OCI-LY7 (cell line): ENCODE measurements at regions of chr2 and their contacts with region 1.

Region 1: GRCh38 chr2:157404363-157404762 is 39.5 kb downstream of the CYTIP start:
- DNase-seq: peak; percentile 93
- H3K4me3 ChIP-seq: peak overlapping the region; percentile 44
- H3K27ac ChIP-seq: peak overlapping the region; percentile 92
- H3K4me1 ChIP-seq: peaks cover 40% of the 10 kb centered on the region
- CTCF ChIP-seq: no peak

Region 2: GRCh38 chr2:157296490-157297357 is 107.6 kb before region 1 on chr2:
- CTCF ChIA-PET with region 1: no interaction called
- POLR2A ChIA-PET with region 1: no interaction called
- intact Hi-C with region 1: no loop called
- DNase-seq: no peak
- H3K4me3 ChIP-seq: no peak overlapping the region
- H3K27ac ChIP-seq: no peak overlapping the region
- H3K4me1 ChIP-seq: no peaks in the 10 kb centered on the region
- CTCF ChIP-seq: no peak

Region 3: GRCh38 chr2:157327621-157328500 is 76.5 kb before region 1 on chr2:
- CTCF ChIA-PET with region 1: no interaction called
- POLR2A ChIA-PET with region 1: interaction called, 6 read pairs
- intact Hi-C with region 1: loop called (anchors 5 kb)
- DNase-seq: peak; percentile 84
- H3K4me3 ChIP-seq: no peak overlapping the region
- H3K27ac ChIP-seq: no peak overlapping the region
- H3K4me1 ChIP-seq: peaks cover 15% of the 10 kb centered on the region
- CTCF ChIP-seq: peak; percentile 97

Region 4: DNA sequence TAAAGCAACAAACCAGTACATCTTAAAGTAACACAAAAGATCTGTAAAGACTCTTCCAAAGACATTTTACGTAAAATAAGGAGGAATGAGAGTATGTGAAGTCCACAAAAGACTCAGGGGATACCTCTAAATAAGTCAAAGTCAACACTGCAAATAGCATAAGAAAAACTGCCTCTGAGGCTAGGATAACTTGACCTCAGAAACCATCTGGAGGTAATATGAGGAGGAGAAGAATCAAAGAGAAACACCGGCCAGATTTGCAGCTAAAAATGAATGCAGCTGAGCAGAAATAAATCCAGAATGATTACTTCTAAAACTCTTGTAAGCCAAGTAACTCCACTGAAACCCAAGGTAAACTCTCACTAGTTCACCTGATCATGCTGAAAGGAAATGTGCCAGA is 26.5 kb before region 1 on chr2:
- CTCF ChIA-PET with region 1: no interaction called
- POLR2A ChIA-PET with region 1: interaction called, 10 read pairs
- intact Hi-C with region 1: no loop called
- DNase-seq: no peak
- H3K4me3 ChIP-seq: no peak overlapping the region
- H3K27ac ChIP-seq: no peak overlapping the region
- H3K4me1 ChIP-seq: no peaks in the 10 kb centered on the region
- CTCF ChIP-seq: no peak

Region 5: GRCh38 chr2:157468931-157469708 is 64.8 kb after region 1 on chr2:
- CTCF ChIA-PET with region 1: no interaction called
- POLR2A ChIA-PET with region 1: interaction called, 3 read pairs
- intact Hi-C with region 1: loop called (anchors 2 kb)
- DNase-seq: peak; percentile 90
- H3K4me3 ChIP-seq: peak overlapping the region; percentile 64
- H3K27ac ChIP-seq: peak overlapping the region; percentile 96
- H3K4me1 ChIP-seq: peaks cover 53% of the 10 kb centered on the region
- CTCF ChIP-seq: no peak

Region 6: GRCh38 chr2:157592948-157593347 is 188.6 kb after region 1 on chr2:
- CTCF ChIA-PET with region 1: no interaction called
- POLR2A ChIA-PET with region 1: no interaction called
- intact Hi-C with region 1: no loop called
- DNase-seq: peak; percentile 35
- H3K4me3 ChIP-seq: no peak overlapping the region
- H3K27ac ChIP-seq: no peak overlapping the region
- H3K4me1 ChIP-seq: no peaks in the 10 kb centered on the region
- CTCF ChIP-seq: peak; percentile 65